ENCODE measurements at regions of chr4 and their contacts with region 1.

Region 1: DNA sequence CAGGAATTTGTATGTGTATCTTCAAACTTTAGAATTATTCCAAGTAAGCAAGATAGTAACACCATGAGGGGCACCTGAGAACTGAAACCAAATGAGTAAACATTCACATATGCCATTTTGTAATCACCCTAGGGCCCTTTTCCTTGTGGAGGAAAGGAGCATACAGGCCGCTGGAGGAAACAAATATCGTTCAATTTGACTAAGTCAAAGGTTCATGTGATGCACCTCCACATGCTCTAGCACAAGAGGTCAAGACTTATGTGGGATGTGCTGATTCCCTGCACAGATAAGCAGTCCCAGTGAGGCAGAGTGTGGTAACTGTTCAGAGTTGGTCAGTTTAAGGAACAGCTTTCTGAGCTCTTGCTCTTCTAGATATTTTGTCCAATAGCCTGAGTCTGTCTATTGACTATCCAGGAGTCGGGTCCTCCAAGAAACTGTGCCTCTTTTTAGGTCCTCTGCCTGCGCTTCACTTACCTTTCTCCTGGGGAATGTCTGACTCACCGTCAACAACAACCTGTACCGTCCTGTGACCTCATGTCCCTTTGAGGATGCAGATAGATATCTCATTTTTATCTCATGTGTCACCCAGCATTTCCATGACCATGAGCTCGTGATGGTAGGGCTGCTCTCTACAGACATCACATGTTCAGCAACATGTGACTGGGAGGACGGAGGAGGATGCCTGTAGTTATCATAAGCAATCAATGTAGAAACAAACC is 196.9 kb downstream of the NWD2 start:
- DNase-seq: peak in 1 of 6 donors; percentile 24
- ATAC-seq: peak in 2 of 4 donors; percentile 51 to 64
- H3K4me3 ChIP-seq: no peak overlapping the region
- H3K27ac ChIP-seq: no peak overlapping the region
- H3K4me1 ChIP-seq: peaks cover 6 to 11% (median 6%) of the 10 kb centered on the region in 3 donors
- H3K27me3 ChIP-seq: no peaks in the 10 kb centered on the region
- CTCF ChIP-seq: no peak

Region 2: DNA sequence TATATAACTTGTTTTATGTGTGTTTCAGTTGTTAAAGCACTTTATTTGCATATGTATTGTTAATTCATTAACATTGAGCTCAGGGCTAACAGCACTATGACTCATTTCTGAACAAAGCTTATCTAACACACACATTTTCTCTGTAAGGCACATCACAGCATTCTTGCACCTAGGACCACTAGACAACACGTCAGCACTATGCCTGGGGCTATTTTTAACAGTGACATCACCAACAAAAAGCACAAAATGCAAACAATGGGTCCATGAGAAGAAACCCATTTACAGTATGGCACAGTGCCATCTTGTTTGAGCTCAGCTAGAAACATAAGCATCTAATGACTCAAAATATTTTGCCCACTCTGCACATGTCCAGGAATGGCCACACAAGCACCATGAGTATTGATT is 120.4 kb after region 1 on chr4:
- intact Hi-C with region 1: loop called in 1 of 3 experiments (anchors 10 kb)
- DNase-seq: no peak
- ATAC-seq: peak in 1 of 4 donors; percentile 52
- H3K4me3 ChIP-seq: no peak overlapping the region
- H3K27ac ChIP-seq: no peak overlapping the region
- H3K4me1 ChIP-seq: no peaks in the 10 kb centered on the region
- H3K27me3 ChIP-seq: no peaks in the 10 kb centered on the region
- CTCF ChIP-seq: no peak